Caco-2 (cell line): ENCODE measurements at regions of chr16 and their contacts with region 1.

Region 1: DNA sequence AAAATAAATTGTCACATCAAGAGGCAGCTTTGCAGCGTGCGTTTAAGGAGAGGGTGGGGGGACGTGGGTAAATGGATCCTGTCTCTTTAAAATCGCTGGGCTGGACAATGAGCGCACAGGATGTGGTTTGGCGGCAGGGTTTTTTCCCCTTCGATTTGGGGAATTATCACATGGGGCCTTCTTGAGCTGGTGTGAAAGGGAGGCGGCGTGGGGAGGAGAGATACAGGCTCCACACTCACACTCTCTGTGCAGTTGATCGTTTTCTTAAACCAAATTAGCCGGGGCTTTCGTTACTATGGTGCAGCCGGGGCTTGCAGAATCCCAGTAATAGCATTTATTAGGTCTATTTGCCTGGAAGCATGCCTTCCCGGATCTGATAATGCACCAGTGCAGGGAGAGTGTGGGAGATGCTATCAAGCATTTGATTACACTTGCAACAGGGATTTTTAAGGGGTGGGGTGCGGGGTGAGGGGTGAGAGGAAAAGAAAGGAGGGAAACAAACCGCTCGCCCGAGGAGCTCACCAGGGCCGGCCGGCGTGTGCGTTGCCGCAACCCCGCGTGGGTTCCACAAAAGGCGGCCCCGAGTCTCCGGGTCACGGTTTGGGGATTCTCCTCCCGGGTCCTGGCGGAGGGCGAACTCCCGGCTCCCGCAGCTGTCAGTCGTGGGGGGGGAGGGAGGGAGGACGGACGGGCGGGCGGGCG is 58.9 kb upstream of the GSE1 start:
- DNase-seq: peak; percentile 51 to 62
- H3K4me3 ChIP-seq: peak overlapping the region; percentile 76
- H3K4me3 Mint-ChIP-seq: peak overlapping the region; percentile 93
- H3K27ac Mint-ChIP-seq: peak overlapping the region; percentile 85
- H3K4me1 ChIP-seq: peaks cover 30% of the 10 kb centered on the region
- H3K4me1 Mint-ChIP-seq: peaks cover 26% of the 10 kb centered on the region
- H3K27me3 ChIP-seq: no peaks in the 10 kb centered on the region
- H3K27me3 Mint-ChIP-seq: no peaks in the 10 kb centered on the region
- CTCF ChIP-seq: no peak

Region 2: GRCh38 chr16:85395190-85395912 is 158.9 kb before region 1 on chr16:
- CTCF ChIA-PET with region 1: interaction called, 13 read pairs
- POLR2A ChIA-PET with region 1: no interaction called
- intact Hi-C with region 1: no loop called
- DNase-seq: peak in 1 of 2 experiments; percentile 25
- H3K4me3 ChIP-seq: no peak overlapping the region
- H3K4me3 Mint-ChIP-seq: no peak overlapping the region
- H3K27ac Mint-ChIP-seq: no peak overlapping the region
- H3K4me1 ChIP-seq: peaks cover 12% of the 10 kb centered on the region
- H3K4me1 Mint-ChIP-seq: peaks cover 7% of the 10 kb centered on the region
- H3K27me3 ChIP-seq: no peaks in the 10 kb centered on the region
- H3K27me3 Mint-ChIP-seq: no peaks in the 10 kb centered on the region
- CTCF ChIP-seq: no peak

Region 3: GRCh38 chr16:85437166-85438055 is 116.9 kb before region 1 on chr16:
- CTCF ChIA-PET with region 1: interaction called, 12 read pairs
- POLR2A ChIA-PET with region 1: interaction called, 4 read pairs
- intact Hi-C with region 1: loop called (anchors 5 kb)
- DNase-seq: peak; percentile 89 to 93
- H3K4me3 ChIP-seq: peak overlapping the region; percentile 29
- H3K4me3 Mint-ChIP-seq: peak overlapping the region; percentile 76
- H3K27ac Mint-ChIP-seq: peak overlapping the region; percentile 92
- H3K4me1 ChIP-seq: peaks cover 43% of the 10 kb centered on the region
- H3K4me1 Mint-ChIP-seq: peaks cover 17% of the 10 kb centered on the region
- H3K27me3 ChIP-seq: no peaks in the 10 kb centered on the region
- H3K27me3 Mint-ChIP-seq: no peaks in the 10 kb centered on the region
- CTCF ChIP-seq: no peak

Region 4: DNA sequence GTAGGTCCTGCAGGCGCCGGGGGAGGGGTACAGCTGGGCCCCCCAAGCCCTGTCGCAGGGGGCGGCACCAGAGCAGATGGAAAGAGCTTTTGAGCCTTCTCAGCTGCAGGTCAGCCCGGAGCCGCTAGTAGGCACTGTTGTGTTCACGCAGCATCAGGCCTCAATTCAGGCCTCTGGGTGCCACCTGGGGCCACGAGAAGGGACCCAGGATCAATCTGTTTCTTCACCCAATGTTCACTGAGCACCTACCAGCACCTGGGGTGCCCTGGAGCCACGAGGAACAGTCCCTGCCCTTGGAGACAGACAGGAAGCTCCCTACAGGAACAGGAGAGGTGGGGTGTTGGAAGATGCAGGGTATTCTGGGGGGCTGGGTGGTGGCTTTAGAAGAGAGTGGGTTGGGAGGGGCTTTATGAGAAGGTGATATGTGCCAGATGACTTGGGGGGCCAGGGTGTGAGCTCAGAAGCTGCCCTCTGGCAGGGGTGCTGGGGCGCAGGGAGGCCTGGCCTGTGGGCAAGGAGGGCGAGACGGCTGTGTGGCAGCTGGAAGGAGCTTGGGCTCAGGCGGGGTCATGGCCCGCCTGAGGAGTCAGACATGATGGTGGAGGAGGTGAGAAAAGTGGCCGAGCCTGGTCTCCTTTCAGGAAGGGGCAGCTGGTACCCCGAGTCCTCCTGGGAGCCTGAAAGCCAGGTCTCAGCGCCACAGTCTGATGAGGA is 63.0 kb before region 1 on chr16:
- CTCF ChIA-PET with region 1: interaction called, 17 read pairs
- POLR2A ChIA-PET with region 1: no interaction called
- intact Hi-C with region 1: loop called (anchors 2 kb)
- DNase-seq: peak in 1 of 2 experiments; percentile 34
- H3K4me3 ChIP-seq: no peak overlapping the region
- H3K4me3 Mint-ChIP-seq: peak overlapping the region; percentile 62
- H3K27ac Mint-ChIP-seq: peak overlapping the region; percentile 88
- H3K4me1 ChIP-seq: peaks cover 30% of the 10 kb centered on the region
- H3K4me1 Mint-ChIP-seq: peaks cover 34% of the 10 kb centered on the region
- H3K27me3 ChIP-seq: no peaks in the 10 kb centered on the region
- H3K27me3 Mint-ChIP-seq: no peaks in the 10 kb centered on the region
- CTCF ChIP-seq: peak; percentile 40 to 63

Region 5: GRCh38 chr16:85522842-85523601 is 31.2 kb before region 1 on chr16:
- CTCF ChIA-PET with region 1: interaction called, 12 read pairs
- POLR2A ChIA-PET with region 1: interaction called, 3 read pairs
- intact Hi-C with region 1: loop called (anchors 1 kb)
- DNase-seq: no peak
- H3K4me3 ChIP-seq: no peak overlapping the region
- H3K4me3 Mint-ChIP-seq: peak overlapping the region; percentile 33
- H3K27ac Mint-ChIP-seq: peak overlapping the region; percentile 89
- H3K4me1 ChIP-seq: peaks cover 82% of the 10 kb centered on the region
- H3K4me1 Mint-ChIP-seq: peaks cover 53% of the 10 kb centered on the region
- H3K27me3 ChIP-seq: no peaks in the 10 kb centered on the region
- H3K27me3 Mint-ChIP-seq: no peaks in the 10 kb centered on the region
- CTCF ChIP-seq: no peak

Region 6: GRCh38 chr16:85536073-85536410 is 18.2 kb before region 1 on chr16:
- CTCF ChIA-PET with region 1: interaction called, 25 read pairs
- POLR2A ChIA-PET with region 1: interaction called, 11 read pairs
- intact Hi-C with region 1: loop called (anchors 1 kb)
- DNase-seq: no peak
- H3K4me3 ChIP-seq: no peak overlapping the region
- H3K4me3 Mint-ChIP-seq: peak overlapping the region; percentile 58
- H3K27ac Mint-ChIP-seq: peak overlapping the region; percentile 97
- H3K4me1 ChIP-seq: peaks cover 40% of the 10 kb centered on the region
- H3K4me1 Mint-ChIP-seq: peaks cover 34% of the 10 kb centered on the region
- H3K27me3 ChIP-seq: no peaks in the 10 kb centered on the region
- H3K27me3 Mint-ChIP-seq: no peaks in the 10 kb centered on the region
- CTCF ChIP-seq: no peak

Region 7: GRCh38 chr16:85586380-85587104 is 32.3 kb after region 1 on chr16:
- CTCF ChIA-PET with region 1: no interaction called
- POLR2A ChIA-PET with region 1: no interaction called
- intact Hi-C with region 1: no loop called
- DNase-seq: no peak
- H3K4me3 ChIP-seq: no peak overlapping the region
- H3K4me3 Mint-ChIP-seq: no peak overlapping the region
- H3K27ac Mint-ChIP-seq: no peak overlapping the region
- H3K4me1 ChIP-seq: no peaks in the 10 kb centered on the region
- H3K4me1 Mint-ChIP-seq: no peaks in the 10 kb centered on the region
- H3K27me3 ChIP-seq: no peaks in the 10 kb centered on the region
- H3K27me3 Mint-ChIP-seq: no peaks in the 10 kb centered on the region
- CTCF ChIP-seq: no peak

Region 8: GRCh38 chr16:85615852-85616606 is 61.8 kb after region 1 on chr16:
- CTCF ChIA-PET with region 1: interaction called, 15 read pairs
- POLR2A ChIA-PET with region 1: interaction called, 20 read pairs
- intact Hi-C with region 1: no loop called
- DNase-seq: peak; percentile 71 to 79
- H3K4me3 ChIP-seq: no peak overlapping the region; the same call in 1 of the 2 replicates
- H3K4me3 Mint-ChIP-seq: peak overlapping the region; percentile 81
- H3K27ac Mint-ChIP-seq: peak overlapping the region; percentile 85
- H3K4me1 ChIP-seq: peaks cover 21% of the 10 kb centered on the region
- H3K4me1 Mint-ChIP-seq: peaks cover 26% of the 10 kb centered on the region
- H3K27me3 ChIP-seq: no peaks in the 10 kb centered on the region
- H3K27me3 Mint-ChIP-seq: no peaks in the 10 kb centered on the region
- CTCF ChIP-seq: peak; percentile 88 to 90

Region 9: DNA sequence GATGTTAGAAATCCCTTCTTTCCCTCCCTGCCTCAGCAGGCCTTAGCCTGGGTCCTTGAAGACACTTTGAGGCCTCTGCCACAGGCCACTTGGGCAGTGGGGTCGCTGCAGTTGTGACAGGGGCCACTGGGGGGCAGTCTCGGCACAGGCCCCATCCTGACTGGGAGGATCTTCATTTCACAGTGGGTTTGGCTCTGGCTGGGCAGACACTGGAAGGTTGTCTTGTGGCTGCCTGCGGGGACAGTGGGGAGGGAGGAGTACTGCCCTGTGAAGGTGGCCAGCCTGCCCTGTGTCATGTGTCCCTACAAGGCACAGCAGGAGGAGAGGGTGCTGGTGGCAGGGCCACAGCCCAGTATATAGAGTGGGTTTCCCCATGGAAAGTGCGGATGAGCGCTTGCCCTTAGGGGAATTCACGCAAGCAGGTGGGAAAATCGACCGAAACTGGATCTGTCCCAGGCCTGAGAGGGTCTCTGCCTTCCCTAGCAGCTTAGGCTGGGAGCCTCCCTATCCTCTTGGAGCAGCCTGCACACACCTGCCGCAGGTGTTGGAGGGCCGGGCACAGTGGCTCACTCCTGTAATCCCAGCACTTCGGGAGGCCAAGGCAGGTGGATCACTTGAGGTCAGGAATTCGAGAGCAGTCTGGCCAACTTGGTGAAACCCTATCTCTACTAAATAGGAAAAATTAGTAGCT is 105.7 kb after region 1 on chr16:
- CTCF ChIA-PET with region 1: no interaction called
- POLR2A ChIA-PET with region 1: no interaction called
- intact Hi-C with region 1: no loop called
- DNase-seq: peak; percentile 76 to 87
- H3K4me3 ChIP-seq: no peak overlapping the region
- H3K4me3 Mint-ChIP-seq: no peak overlapping the region
- H3K27ac Mint-ChIP-seq: no peak overlapping the region
- H3K4me1 ChIP-seq: no peaks in the 10 kb centered on the region
- H3K4me1 Mint-ChIP-seq: no peaks in the 10 kb centered on the region
- H3K27me3 ChIP-seq: no peaks in the 10 kb centered on the region
- H3K27me3 Mint-ChIP-seq: no peaks in the 10 kb centered on the region
- CTCF ChIP-seq: peak; percentile 92 to 96